MCF 10A (cell line): ENCODE measurements at regions of chr3 and their contacts with region 1.

Region 1: DNA sequence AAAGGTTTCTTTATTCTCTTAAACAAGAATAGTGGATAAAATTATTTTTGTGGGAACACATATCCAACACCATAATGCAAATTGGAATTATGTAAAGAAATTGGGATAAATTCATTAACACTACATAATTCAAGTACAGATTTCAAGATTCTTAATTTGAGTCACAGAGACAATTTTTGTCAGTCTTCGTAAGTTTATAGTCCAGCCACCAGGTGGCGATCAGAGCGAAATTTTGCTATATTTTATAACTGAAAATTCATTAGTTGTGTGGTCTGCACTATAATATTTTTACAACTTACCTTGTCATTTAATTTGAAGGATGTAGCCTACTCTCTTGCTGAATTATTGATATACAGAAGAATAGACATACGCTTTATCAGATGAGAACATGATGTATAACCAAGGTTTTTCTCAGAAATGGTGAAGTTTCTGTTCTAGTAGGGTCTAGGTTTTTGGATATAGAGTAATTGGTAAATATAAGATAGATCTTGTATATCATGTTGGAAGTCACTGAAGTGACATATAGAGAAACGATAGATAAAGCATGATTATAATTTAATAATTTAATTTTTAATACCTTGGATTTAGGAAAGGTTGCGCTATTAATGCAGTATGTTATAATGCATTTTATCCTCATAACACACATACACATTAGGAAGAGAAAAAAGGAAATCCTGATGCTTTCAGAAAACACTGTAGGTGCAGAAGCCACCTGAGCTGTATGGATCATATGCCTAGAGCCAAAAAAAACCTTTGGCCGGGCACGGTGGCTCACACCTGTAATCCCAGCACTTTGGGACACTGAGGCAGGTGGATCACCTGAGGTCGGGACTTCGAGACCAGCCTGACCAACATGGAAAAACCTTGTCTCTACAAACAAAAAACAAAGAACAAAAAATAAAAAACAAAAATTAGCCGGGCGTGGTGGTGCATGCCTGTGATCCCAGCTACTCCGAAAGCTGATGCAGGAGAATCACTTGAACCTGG is 31.7 kb downstream of the PLSCR4 start:
- DNase-seq: peak; percentile 49
- H3K4me3 Mint-ChIP-seq: no peak overlapping the region
- H3K27ac Mint-ChIP-seq: no peak overlapping the region
- H3K4me1 Mint-ChIP-seq: peaks cover 22% of the 10 kb centered on the region
- H3K27me3 Mint-ChIP-seq: no peaks in the 10 kb centered on the region
- CTCF ChIP-seq: peak; percentile 66

Region 2: GRCh38 chr3:146160964-146161662 is 58.1 kb before region 1 on chr3 and contains the start of gene PLOD2:
- CTCF ChIA-PET with region 1: no interaction called
- POLR2A ChIA-PET with region 1: no interaction called
- intact Hi-C with region 1: no loop called
- DNase-seq: peak; percentile 75
- H3K4me3 Mint-ChIP-seq: peak within 1 kb of the TSS; percentile 86
- H3K27ac Mint-ChIP-seq: peak within 1 kb of the TSS; percentile 86
- H3K4me1 Mint-ChIP-seq: peaks cover 44% of the 10 kb centered on the region
- H3K27me3 Mint-ChIP-seq: no peaks in the 10 kb centered on the region
- CTCF ChIP-seq: no peak
- total RNA-seq, gene PLOD2: 109 and 149 TPM in 2 replicates

Region 3: GRCh38 chr3:146256851-146257486 is 37.8 kb after region 1 on chr3:
- CTCF ChIA-PET with region 1: no interaction called
- POLR2A ChIA-PET with region 1: no interaction called
- intact Hi-C with region 1: no loop called
- DNase-seq: peak; percentile 19
- H3K4me3 Mint-ChIP-seq: no peak overlapping the region
- H3K27ac Mint-ChIP-seq: no peak overlapping the region
- H3K4me1 Mint-ChIP-seq: no peaks in the 10 kb centered on the region
- H3K27me3 Mint-ChIP-seq: no peaks in the 10 kb centered on the region
- CTCF ChIP-seq: no peak

Region 4: DNA sequence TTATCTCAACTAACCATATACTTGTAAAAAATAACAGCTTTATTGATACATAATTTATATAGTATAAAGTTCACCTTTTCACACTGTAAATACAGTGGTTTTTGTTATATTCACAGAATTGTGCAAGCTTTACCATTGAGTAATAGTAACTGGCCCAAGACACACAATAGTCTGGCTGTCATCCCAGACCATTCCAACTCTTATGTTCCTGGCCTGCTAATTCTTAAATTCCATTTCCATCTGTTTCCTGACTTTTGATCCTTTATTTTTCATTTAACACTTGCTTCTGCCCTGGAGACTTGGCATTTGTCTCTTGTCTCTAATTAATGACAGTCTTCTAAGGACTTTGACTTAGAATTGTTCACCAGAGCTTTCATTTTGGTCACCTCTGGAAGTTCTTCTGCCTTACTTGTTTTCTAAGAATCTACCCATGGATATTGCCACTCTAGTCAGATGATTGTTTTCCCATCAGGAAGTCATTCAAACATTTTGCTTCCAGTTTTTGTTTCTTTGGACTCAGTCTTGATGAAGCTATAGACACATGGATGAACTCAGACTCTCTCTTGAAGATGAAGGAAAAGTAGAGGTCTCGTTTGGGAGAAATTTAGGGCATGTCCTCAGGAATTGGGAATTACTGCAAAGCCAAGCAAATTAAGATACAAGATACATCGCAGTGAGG is 58.9 kb after region 1 on chr3:
- CTCF ChIA-PET with region 1: no interaction called
- POLR2A ChIA-PET with region 1: no interaction called
- intact Hi-C with region 1: loop called (anchors 10 kb)
- DNase-seq: peak; percentile 90
- H3K4me3 Mint-ChIP-seq: no peak overlapping the region
- H3K27ac Mint-ChIP-seq: no peak overlapping the region
- H3K4me1 Mint-ChIP-seq: peaks cover 22% of the 10 kb centered on the region
- H3K27me3 Mint-ChIP-seq: no peaks in the 10 kb centered on the region
- CTCF ChIP-seq: no peak